ENCODE measurements at regions of chr1 and their contacts with region 1.

Region 1: DNA sequence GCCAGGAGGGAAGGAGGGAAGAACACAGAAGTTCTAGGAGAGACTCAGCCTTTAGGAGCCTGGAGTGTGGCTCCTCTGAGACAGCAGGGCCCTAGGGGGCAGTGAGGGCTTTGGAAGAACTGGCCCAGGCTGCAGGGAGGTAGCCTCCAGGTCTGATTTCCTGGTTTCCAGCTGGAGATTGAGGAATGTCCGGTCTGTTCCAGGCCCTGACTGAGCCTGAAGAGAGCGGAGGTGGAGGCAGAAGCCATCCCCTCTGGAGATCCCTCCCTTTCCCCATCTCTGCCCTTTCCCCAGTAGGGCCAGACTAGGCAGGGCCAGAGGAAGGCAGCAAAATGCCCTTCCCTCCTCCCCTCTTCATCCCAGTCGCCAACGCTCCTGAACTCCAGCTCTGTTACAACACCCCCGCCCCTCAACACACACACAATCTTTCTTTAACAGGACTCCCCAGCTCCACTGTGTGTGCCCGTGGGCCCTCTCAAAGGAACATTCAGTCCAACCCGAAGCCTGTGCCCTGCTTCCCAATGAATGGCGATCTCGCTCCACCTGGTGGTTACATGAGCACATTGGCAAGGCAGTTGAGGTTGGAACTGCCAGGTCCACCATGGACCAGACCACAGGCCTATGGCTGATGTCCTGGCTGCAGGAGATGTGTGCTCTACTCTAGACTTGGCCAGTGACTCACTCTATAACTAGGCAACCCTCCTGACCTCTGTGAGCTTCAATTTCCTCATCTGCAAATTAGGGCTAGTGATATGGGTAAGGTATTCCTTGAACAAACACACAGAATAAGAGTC is 32.0 kb downstream of the MAP7D1 start:
- DNase-seq: peak; percentile 84
- CTCF ChIP-seq: peak; percentile 94

Region 2: GRCh38 chr1:36107394-36107793 is 80.6 kb before region 1 on chr1:
- CTCF ChIA-PET with region 1: interaction called, 53 read pairs
- POLR2A ChIA-PET with region 1: no interaction called
- DNase-seq: no peak
- CTCF ChIP-seq: no peak

Region 3: GRCh38 chr1:36142121-36142520 is 45.9 kb before region 1 on chr1:
- CTCF ChIA-PET with region 1: interaction called, 16 read pairs
- POLR2A ChIA-PET with region 1: no interaction called
- DNase-seq: no peak
- CTCF ChIP-seq: no peak

Region 4: GRCh38 chr1:36160949-36161485 is 27.0 kb before region 1 on chr1:
- CTCF ChIA-PET with region 1: interaction called, 89 read pairs
- POLR2A ChIA-PET with region 1: interaction called, 4 read pairs
- DNase-seq: peak; percentile 71
- CTCF ChIP-seq: peak; percentile 46

Region 5: GRCh38 chr1:36207339-36207738 is 19.3 kb after region 1 on chr1:
- CTCF ChIA-PET with region 1: interaction called, 15 read pairs
- POLR2A ChIA-PET with region 1: no interaction called
- DNase-seq: peak; percentile 32
- CTCF ChIP-seq: no peak